CD4-positive, alpha-beta T cell (primary cell): ENCODE measurements at regions of chr14 and their contacts with region 1.

Region 1: DNA sequence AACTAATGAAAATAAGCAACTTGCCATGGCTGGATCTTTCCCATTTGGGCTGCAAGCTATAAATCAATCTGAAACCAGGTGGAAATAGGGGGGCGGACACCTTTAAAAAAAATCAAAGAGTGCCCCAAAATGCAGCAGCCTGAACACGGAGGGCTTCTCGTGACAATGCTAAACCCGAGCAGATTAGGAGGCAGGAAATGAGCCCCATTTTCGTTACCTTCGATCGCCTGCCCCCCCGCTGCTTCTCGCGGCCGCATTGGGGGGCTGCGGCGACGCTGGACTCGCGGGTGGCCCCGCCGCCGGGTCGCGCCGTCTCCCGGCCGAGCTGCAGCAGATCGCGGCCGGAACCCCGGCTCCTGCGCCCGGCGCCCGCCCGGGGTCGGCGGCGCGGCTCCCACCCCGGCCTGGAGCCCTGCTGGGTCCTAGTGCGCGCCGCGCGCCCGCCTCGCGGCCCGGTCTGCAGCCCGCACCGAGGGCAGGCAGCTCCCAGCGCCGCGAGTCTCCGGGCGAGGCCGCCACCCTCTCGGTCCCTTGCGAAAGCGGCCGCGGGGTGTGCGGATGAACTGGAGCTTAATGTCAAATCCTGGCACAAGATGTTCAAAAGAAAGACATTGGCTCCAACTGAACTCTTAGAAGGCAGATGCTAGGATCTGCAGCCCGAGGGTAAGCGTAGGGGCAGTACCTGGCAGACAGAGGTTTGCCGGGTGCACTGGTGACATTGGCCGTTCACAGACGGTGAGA is 201.9 kb upstream of the FOXN3 start:
- DNase-seq: peak; percentile 35 to 84 (median 58)
- ATAC-seq: peak; percentile 42
- H3K4me3 ChIP-seq: peak overlapping the region; percentile 76
- H3K4me3 Mint-ChIP-seq: peak overlapping the region; percentile 96
- H3K27ac ChIP-seq: peak overlapping the region; percentile 62 to 86
- H3K27ac Mint-ChIP-seq: peak overlapping the region; percentile 99
- H3K4me1 ChIP-seq: peaks cover 41% of the 10 kb centered on the region
- H3K4me1 Mint-ChIP-seq: peaks cover 70% of the 10 kb centered on the region
- H3K27me3 ChIP-seq: no peaks in the 10 kb centered on the region
- H3K27me3 Mint-ChIP-seq: no peaks in the 10 kb centered on the region
- CTCF ChIP-seq: no peak

Region 2: DNA sequence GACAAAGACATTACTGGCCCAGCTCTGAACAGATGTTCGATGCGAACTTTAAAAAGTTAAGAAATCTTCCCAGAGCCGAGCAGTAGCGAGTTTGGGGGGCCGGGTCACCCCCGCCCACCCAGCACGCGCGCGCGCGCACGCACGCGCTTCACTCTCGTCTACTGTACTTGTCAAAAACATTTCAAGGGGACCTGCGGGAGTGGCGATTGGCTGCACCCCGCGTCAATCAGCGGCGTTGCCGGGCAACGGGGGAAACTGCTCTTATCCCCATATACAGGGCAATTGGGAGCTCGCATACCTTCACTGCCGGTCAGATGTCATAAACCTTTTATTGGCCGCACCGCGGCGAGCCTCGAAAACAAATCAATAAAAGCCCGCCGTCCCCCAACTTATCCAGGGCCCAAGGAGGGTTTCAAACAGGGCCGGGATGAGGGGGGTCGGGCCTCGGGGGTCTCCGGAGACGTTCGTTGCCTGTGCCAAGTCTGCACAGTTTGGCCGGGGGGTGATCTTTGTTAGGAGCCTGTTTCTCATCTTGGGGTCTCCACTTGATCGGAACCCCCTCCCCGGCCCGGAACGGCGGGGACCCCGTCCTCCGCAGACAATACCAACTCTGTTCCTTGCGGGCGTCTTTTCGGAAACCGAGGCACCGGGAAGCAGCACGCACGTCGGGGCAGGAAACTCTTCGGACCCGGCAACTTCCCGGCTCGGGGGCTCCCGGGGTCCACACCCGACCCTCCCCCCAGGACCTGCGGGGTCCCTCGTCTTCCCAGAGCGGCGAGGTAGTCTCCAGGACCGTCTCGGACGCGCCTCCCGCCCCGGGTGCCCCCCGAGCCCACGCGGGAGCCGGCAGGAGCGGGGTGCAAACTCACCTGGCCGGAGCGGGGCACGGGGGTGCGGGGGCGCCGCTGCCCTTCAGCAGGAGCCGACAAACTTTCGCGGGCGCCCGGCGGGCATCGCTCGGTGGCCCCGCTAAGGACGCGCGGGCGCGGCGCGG is 202.7 kb before region 1 on chr14:
- CTCF ChIA-PET with region 1: no interaction called
- POLR2A ChIA-PET with region 1: interaction called, 3 read pairs
- intact Hi-C with region 1: loop called (anchors 5 kb)
- DNase-seq: peak; percentile 97 to 100 (median 99)
- ATAC-seq: peak; percentile 73
- H3K4me3 ChIP-seq: peak overlapping the region; percentile 71
- H3K4me3 Mint-ChIP-seq: peak overlapping the region; percentile 96
- H3K27ac ChIP-seq: peak overlapping the region; percentile 51 to 62
- H3K27ac Mint-ChIP-seq: peak overlapping the region; percentile 96
- H3K4me1 ChIP-seq: peaks cover 26% of the 10 kb centered on the region
- H3K4me1 Mint-ChIP-seq: peaks cover 71% of the 10 kb centered on the region
- H3K27me3 ChIP-seq: no peaks in the 10 kb centered on the region
- H3K27me3 Mint-ChIP-seq: no peaks in the 10 kb centered on the region
- CTCF ChIP-seq: no peak

Region 3: DNA sequence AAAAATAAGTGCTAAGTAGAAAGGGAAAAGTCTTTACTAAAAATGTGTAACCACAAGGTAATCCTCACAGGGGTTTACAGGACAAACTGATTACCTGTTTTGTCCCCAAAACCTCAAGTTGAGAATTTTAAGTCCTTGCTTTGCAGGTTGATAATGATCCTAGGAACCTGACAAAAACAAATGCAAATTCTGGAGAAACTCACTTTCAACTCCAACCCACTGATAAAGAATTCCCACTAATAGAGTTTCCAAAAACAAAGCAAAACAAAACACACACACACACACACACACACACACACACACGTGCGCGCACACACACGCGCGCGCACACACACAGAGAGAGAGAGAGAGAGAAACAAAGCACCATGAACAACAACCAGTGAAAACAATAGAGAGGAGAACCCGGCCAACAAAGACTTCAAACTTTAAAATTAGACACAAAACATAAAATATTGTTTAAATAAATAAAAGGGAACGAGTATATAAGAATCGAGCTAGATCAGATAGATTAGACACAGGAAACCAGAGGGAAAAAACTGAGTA is 15.0 kb before region 1 on chr14:
- CTCF ChIA-PET with region 1: no interaction called
- POLR2A ChIA-PET with region 1: interaction called, 8 read pairs
- intact Hi-C with region 1: loop called in 1 of 2 experiments (anchors 2 kb)
- DNase-seq: no peak
- ATAC-seq: no peak
- H3K4me3 ChIP-seq: no peak overlapping the region
- H3K4me3 Mint-ChIP-seq: peak overlapping the region; percentile 76
- H3K27ac ChIP-seq: no peak overlapping the region
- H3K27ac Mint-ChIP-seq: peak overlapping the region; percentile 74
- H3K4me1 ChIP-seq: peaks cover 7% of the 10 kb centered on the region
- H3K4me1 Mint-ChIP-seq: peaks cover 61% of the 10 kb centered on the region
- H3K27me3 ChIP-seq: no peaks in the 10 kb centered on the region
- H3K27me3 Mint-ChIP-seq: no peaks in the 10 kb centered on the region
- CTCF ChIP-seq: no peak

Region 4: GRCh38 chr14:89681086-89682018 is 62.4 kb after region 1 on chr14:
- CTCF ChIA-PET with region 1: no interaction called
- POLR2A ChIA-PET with region 1: interaction called, 14 read pairs
- intact Hi-C with region 1: loop called in 1 of 2 experiments (anchors 1 kb)
- DNase-seq: peak in 5 of 14 experiments; percentile 9 to 71 (median 66)
- ATAC-seq: peak; percentile 76
- H3K4me3 ChIP-seq: peak overlapping the region; percentile 26
- H3K4me3 Mint-ChIP-seq: peak overlapping the region; percentile 81
- H3K27ac ChIP-seq: peak overlapping the region; percentile 53 to 62
- H3K27ac Mint-ChIP-seq: peak overlapping the region; percentile 92
- H3K4me1 ChIP-seq: peaks cover 30% of the 10 kb centered on the region
- H3K4me1 Mint-ChIP-seq: peaks cover 47% of the 10 kb centered on the region
- H3K27me3 ChIP-seq: no peaks in the 10 kb centered on the region
- H3K27me3 Mint-ChIP-seq: no peaks in the 10 kb centered on the region
- CTCF ChIP-seq: no peak

Region 5: DNA sequence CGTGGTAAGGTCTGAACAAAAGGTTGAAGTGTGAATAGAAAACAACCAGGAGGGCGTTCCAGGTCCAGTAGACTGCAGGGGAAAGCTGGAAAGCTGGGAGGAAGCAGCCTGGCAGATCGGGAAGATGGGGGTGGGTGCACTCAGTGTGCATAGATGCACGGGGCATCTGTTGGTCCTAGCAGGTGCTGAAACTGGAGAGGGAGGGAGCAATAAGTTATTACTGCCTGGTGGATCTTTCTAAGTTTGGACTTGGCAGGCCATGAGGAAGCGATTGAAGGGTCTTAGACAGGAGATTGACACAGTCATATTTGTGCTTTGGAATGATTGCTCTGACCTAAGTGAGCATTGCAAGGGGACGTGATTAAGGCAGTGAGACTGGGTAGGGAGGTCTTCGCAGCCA is 141.1 kb after region 1 on chr14:
- CTCF ChIA-PET with region 1: no interaction called
- POLR2A ChIA-PET with region 1: interaction called, 3 read pairs
- intact Hi-C with region 1: loop called in 1 of 2 experiments (anchors 5 kb)
- DNase-seq: no peak
- ATAC-seq: no peak
- H3K4me3 ChIP-seq: no peak overlapping the region
- H3K4me3 Mint-ChIP-seq: no peak overlapping the region
- H3K27ac ChIP-seq: no peak overlapping the region
- H3K27ac Mint-ChIP-seq: no peak overlapping the region
- H3K4me1 ChIP-seq: no peaks in the 10 kb centered on the region
- H3K4me1 Mint-ChIP-seq: peaks cover 19% of the 10 kb centered on the region
- H3K27me3 ChIP-seq: no peaks in the 10 kb centered on the region
- H3K27me3 Mint-ChIP-seq: no peaks in the 10 kb centered on the region
- CTCF ChIP-seq: no peak

Region 6: DNA sequence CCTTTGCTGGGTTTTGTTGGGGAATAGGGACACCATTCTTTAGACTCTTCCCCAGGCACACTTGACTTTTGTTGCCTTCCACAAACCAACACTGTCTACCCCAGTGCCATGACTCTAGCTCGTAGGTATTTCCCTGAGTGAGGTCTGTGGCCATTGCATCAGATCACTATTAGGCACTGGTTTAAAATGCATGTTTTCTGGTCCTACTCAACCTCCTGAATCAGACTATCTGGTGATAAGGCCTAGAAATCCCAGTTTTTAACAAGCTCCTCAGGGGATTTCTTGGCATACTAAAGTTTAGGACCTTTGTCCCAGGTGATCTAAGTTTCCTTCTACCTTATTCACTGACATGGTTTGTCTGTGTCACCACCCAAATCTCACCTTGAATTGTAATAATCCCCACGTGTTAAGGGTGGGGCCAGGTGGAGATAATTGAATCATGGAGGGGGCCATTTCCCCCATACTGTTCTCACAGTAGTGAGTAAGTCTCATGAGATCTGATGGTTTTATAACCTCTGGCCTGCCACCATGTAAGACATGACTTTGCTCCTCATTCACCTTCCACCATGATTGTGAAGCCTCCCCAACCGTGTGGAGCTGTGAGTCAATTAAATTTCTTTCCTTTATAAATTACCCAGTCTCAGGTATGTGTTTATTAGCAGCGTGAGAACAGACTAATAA is 549.6 kb after region 1 on chr14:
- CTCF ChIA-PET with region 1: no interaction called
- POLR2A ChIA-PET with region 1: no interaction called
- intact Hi-C with region 1: no loop called
- DNase-seq: no peak
- ATAC-seq: no peak
- H3K4me3 ChIP-seq: no peak overlapping the region
- H3K4me3 Mint-ChIP-seq: no peak overlapping the region
- H3K27ac ChIP-seq: no peak overlapping the region
- H3K27ac Mint-ChIP-seq: no peak overlapping the region
- H3K4me1 ChIP-seq: no peaks in the 10 kb centered on the region
- H3K4me1 Mint-ChIP-seq: no peaks in the 10 kb centered on the region
- H3K27me3 ChIP-seq: peaks cover 0 to 8% of the 10 kb centered on the region in 2 experiments
- H3K27me3 Mint-ChIP-seq: peaks cover 40% of the 10 kb centered on the region
- CTCF ChIP-seq: no peak